Naive thymus-derived CD4-positive, alpha-beta T cell (primary cell): ENCODE measurements at regions of chr15 and their contacts with region 1.

Region 1: GRCh38 chr15:50908210-50909009 is at the start of gene AP4E1:
- DNase-seq: peak; percentile 91 to 96 (median 95)
- ATAC-seq: peak; percentile 81
- H3K4me3 ChIP-seq: peak within 1 kb of the TSS; percentile 74
- H3K4me3 Mint-ChIP-seq: peak within 1 kb of the TSS; percentile 89 to 99 (median 96)
- H3K27ac ChIP-seq: peak within 1 kb of the TSS; percentile 99
- H3K27ac Mint-ChIP-seq: peak within 1 kb of the TSS; percentile 93 to 99 (median 98)
- H3K4me1 ChIP-seq: peaks cover 4% of the 10 kb centered on the region in 2 donors
- H3K4me1 Mint-ChIP-seq: peaks cover 11 to 35% (median 30%) of the 10 kb centered on the region in 7 donors
- H3K27me3 ChIP-seq: no peaks in the 10 kb centered on the region
- H3K27me3 Mint-ChIP-seq: no peaks in the 10 kb centered on the region
- total RNA-seq, gene AP4E1: 9.9 to 13.8 (median 12.5) TPM

Region 2: GRCh38 chr15:49235446-49236124 is 1672.8 kb before region 1 on chr15:
- CTCF ChIA-PET with region 1: no interaction called
- POLR2A ChIA-PET with region 1: no interaction called
- intact Hi-C with region 1: loop called in 1 of 2 experiments (anchors 1 kb)
- DNase-seq: peak in 7 of 9 donors; percentile 13 to 51 (median 44)
- ATAC-seq: peak; percentile 87
- H3K4me3 ChIP-seq: no peak overlapping the region
- H3K4me3 Mint-ChIP-seq: no peak overlapping the region
- H3K27ac ChIP-seq: no peak overlapping the region
- H3K27ac Mint-ChIP-seq: peak overlapping the region in 4 of 9 donors; percentile 6 to 67 (median 41)
- H3K4me1 ChIP-seq: no peaks in the 10 kb centered on the region
- H3K4me1 Mint-ChIP-seq: peaks cover 0 to 24% (median 13%) of the 10 kb centered on the region in 7 donors
- H3K27me3 ChIP-seq: no peaks in the 10 kb centered on the region
- H3K27me3 Mint-ChIP-seq: no peaks in the 10 kb centered on the region

Region 3: DNA sequence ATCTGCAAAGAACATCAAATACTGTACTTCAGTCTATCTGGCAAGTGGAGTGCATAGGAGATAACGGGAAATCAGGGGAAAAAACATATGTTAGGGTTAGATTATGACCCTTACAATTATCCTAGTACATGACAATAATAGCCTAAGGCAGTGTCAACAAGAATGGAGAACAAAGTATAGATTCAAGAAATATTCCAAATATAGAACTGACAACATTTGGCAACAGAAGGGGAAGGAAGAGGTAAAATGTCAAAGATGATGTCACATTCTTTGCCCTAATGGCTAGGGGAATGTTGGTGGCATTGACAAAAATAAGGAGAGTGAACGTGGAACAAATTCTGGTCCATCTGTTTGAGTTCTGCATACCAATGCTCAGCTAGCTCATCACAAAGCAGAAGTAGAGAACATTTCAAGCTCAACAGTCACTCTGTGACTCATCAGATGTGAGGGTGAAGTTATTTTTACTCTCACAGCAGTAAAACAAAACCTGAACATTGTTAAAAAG is 773.8 kb before region 1 on chr15:
- CTCF ChIA-PET with region 1: no interaction called
- POLR2A ChIA-PET with region 1: no interaction called
- intact Hi-C with region 1: loop called in 1 of 2 experiments (anchors 1 kb)
- DNase-seq: no peak
- ATAC-seq: peak; percentile 88
- H3K4me3 ChIP-seq: no peak overlapping the region
- H3K4me3 Mint-ChIP-seq: peak overlapping the region in 1 of 10 donors; percentile 59
- H3K27ac ChIP-seq: no peak overlapping the region
- H3K27ac Mint-ChIP-seq: peak overlapping the region in 1 of 9 donors; percentile 84
- H3K4me1 ChIP-seq: no peaks in the 10 kb centered on the region
- H3K4me1 Mint-ChIP-seq: peaks cover 0 to 44% (median 0%) of the 10 kb centered on the region in 7 donors
- H3K27me3 ChIP-seq: no peaks in the 10 kb centered on the region
- H3K27me3 Mint-ChIP-seq: peaks cover 0 to 23% (median 10%) of the 10 kb centered on the region in 5 donors

Region 4: DNA sequence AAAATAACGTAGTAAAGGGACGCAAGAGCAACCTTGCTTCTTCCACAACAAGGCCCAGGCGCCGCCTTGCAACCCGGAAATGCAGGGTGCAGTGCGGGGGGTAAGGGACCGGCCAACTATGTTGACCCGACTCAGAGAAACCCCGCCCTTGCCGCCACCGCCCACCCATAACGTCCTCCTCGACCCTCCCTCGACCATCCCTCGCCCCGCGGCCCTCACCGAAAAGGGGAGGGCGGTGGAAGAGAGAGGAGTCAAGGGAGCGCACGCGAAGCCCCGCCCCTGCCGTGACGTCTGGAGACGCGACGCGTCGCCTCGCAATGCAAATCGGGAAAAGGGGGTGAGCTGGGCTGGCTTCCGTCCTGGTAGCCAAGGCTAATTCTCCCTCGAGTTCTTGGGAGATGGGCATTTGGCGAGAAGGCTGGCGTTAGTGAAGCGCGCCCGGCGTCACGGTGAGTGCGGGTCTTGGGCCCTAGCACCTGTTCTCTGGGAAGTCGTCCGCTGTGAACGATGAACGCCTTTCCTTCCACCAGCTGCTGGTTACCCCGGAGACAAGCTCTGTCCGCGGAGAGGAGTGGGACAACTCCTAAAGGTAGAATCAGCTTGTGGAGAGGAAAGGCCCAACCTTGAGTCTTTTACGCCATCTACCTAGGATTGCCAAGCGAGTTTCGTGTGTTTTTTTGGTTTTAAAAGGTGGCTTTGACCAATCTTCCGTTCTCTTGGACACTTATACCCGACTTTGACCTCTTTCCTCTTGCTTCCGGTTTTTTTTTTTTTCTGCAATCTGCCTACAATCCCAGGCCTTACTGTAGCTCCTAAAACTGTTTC is 484.1 kb before region 1 on chr15 and contains the start of gene USP8:
- CTCF ChIA-PET with region 1: no interaction called
- POLR2A ChIA-PET with region 1: interaction called, 3 read pairs
- intact Hi-C with region 1: loop called (anchors 1 to 2 kb)
- DNase-seq: peak; percentile 88 to 95 (median 93)
- ATAC-seq: peak; percentile 98
- H3K4me3 ChIP-seq: peak within 1 kb of the TSS; percentile 91
- H3K4me3 Mint-ChIP-seq: peak within 1 kb of the TSS; percentile 86 to 100 (median 98)
- H3K27ac ChIP-seq: peak within 1 kb of the TSS; percentile 93
- H3K27ac Mint-ChIP-seq: peak within 1 kb of the TSS; percentile 91 to 99 (median 97)
- H3K4me1 ChIP-seq: peaks cover 8 to 20% of the 10 kb centered on the region in 2 donors
- H3K4me1 Mint-ChIP-seq: peaks cover 23 to 59% (median 34%) of the 10 kb centered on the region in 7 donors
- H3K27me3 ChIP-seq: no peaks in the 10 kb centered on the region
- H3K27me3 Mint-ChIP-seq: no peaks in the 10 kb centered on the region
- total RNA-seq, gene USP8: 52.8 to 61.8 (median 57.1) TPM

Region 5: GRCh38 chr15:50675536-50676144 is 232.8 kb before region 1 on chr15:
- CTCF ChIA-PET with region 1: interaction called, 8 read pairs
- POLR2A ChIA-PET with region 1: interaction called, 3 read pairs
- intact Hi-C with region 1: loop called (anchors 1 kb)
- DNase-seq: peak in 5 of 9 donors; percentile 12 to 30 (median 24)
- ATAC-seq: peak; percentile 31
- H3K4me3 ChIP-seq: no peak overlapping the region
- H3K4me3 Mint-ChIP-seq: no peak overlapping the region
- H3K27ac ChIP-seq: no peak overlapping the region
- H3K27ac Mint-ChIP-seq: peak overlapping the region in 5 of 9 donors; percentile 23 to 61 (median 45)
- H3K4me1 ChIP-seq: peaks cover 0 to 3% of the 10 kb centered on the region in 2 donors
- H3K4me1 Mint-ChIP-seq: peaks cover 9 to 45% (median 27%) of the 10 kb centered on the region in 7 donors
- H3K27me3 ChIP-seq: no peaks in the 10 kb centered on the region
- H3K27me3 Mint-ChIP-seq: no peaks in the 10 kb centered on the region

Region 6: GRCh38 chr15:50876989-50877360 is 31.4 kb before region 1 on chr15:
- CTCF ChIA-PET with region 1: interaction called, 4 read pairs
- POLR2A ChIA-PET with region 1: interaction called, 4 read pairs
- intact Hi-C with region 1: loop called (anchors 1 kb)
- DNase-seq: peak; percentile 34 to 74 (median 60)
- ATAC-seq: peak; percentile 76
- H3K4me3 ChIP-seq: peak overlapping the region; percentile 37
- H3K4me3 Mint-ChIP-seq: peak overlapping the region in 9 of 10 donors; percentile 20 to 82 (median 69)
- H3K27ac ChIP-seq: no peak overlapping the region
- H3K27ac Mint-ChIP-seq: peak overlapping the region in 5 of 9 donors; percentile 43 to 79 (median 55)
- H3K4me1 ChIP-seq: peaks cover 0 to 5% of the 10 kb centered on the region in 2 donors
- H3K4me1 Mint-ChIP-seq: peaks cover 9 to 49% (median 21%) of the 10 kb centered on the region in 7 donors
- H3K27me3 ChIP-seq: no peaks in the 10 kb centered on the region
- H3K27me3 Mint-ChIP-seq: peaks cover 0 to 19% (median 6%) of the 10 kb centered on the region in 5 donors